Naive thymus-derived CD4-positive, alpha-beta T cell (primary cell): ENCODE measurements at regions of chr1 and their contacts with region 1.

Region 1: DNA sequence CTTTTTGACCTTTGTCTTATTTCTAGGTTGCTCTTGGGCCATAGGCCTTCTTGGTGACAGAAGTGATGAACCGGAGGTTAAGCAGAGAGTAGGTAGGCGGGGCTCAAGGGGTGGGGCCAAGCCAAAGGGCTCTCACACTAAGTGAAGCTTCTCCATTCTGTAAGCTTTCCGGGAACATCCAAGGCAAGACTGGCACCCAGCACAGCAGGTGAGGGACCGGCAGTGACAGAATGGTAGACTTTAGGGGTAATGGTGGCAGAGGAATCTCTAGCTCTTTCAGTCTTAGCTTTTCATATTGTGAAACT is at the start of gene TNFAIP8L2:
- DNase-seq: peak in 7 of 9 donors; percentile 50 to 75 (median 66)
- ATAC-seq: peak; percentile 90
- H3K4me3 ChIP-seq: peak within 1 kb of the TSS; percentile 98
- H3K4me3 Mint-ChIP-seq: peak within 1 kb of the TSS; percentile 93 to 100 (median 99)
- H3K27ac ChIP-seq: peak within 1 kb of the TSS; percentile 78
- H3K27ac Mint-ChIP-seq: peak within 1 kb of the TSS; percentile 88 to 97 (median 95)
- H3K4me1 ChIP-seq: peaks cover 23 to 27% of the 10 kb centered on the region in 2 donors
- H3K4me1 Mint-ChIP-seq: peaks cover 34 to 61% (median 46%) of the 10 kb centered on the region in 7 donors
- H3K27me3 ChIP-seq: no peaks in the 10 kb centered on the region
- H3K27me3 Mint-ChIP-seq: no peaks in the 10 kb centered on the region
- total RNA-seq, gene TNFAIP8L2: 3.1 to 59.4 (median 37.6) TPM

Region 2: DNA sequence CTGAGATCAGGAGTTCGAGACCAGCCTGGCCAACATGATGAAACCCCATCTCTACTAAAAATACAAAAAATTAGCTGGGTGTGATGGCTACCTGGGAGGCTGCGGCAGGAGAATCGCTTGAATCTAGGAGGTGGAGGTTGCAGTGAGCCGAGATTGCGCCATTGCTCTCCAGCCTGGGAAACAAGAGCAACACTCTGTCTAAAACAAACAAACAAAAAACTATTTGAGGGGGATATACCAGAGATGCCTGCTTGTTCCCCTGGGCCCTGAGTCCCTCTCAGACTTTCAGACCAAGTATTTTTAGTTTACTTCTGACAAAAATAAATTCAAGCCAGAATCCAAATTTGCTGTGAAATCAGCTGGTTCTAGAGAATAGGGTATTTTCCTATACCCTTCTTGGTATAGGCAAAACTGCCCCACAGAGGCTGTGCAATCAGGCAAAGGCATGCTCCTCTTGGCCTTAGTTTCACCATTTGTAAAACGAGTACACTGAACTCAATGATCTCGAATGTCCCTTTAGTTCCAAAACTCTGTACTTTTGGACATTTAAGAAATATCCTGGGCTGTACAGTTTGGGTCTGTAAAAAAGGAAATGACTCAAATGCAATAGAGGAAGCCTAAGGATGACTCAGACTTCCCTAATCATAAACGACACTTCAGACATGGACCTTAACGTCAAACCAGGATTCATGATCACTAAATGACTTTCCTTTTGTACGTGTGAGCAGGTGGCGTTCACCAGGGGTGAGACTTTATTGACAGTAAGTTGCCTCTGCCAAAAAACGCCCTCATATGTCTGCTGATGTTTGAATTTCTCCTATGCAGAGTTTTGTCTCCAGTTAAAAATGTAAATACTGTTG is 543.2 kb before region 1 on chr1:
- CTCF ChIA-PET with region 1: no interaction called
- POLR2A ChIA-PET with region 1: no interaction called
- intact Hi-C with region 1: loop called in 1 of 2 experiments (anchors 10 kb)
- DNase-seq: peak in 2 of 9 donors; percentile 47 to 55
- ATAC-seq: peak; percentile 48
- H3K4me3 ChIP-seq: no peak overlapping the region
- H3K4me3 Mint-ChIP-seq: peak overlapping the region in 4 of 10 donors; percentile 21 to 80 (median 54)
- H3K27ac ChIP-seq: no peak overlapping the region
- H3K27ac Mint-ChIP-seq: peak overlapping the region; percentile 29 to 95 (median 88)
- H3K4me1 ChIP-seq: peaks cover 30 to 52% of the 10 kb centered on the region in 2 donors
- H3K4me1 Mint-ChIP-seq: peaks cover 27 to 59% (median 51%) of the 10 kb centered on the region in 7 donors
- H3K27me3 ChIP-seq: no peaks in the 10 kb centered on the region
- H3K27me3 Mint-ChIP-seq: no peaks in the 10 kb centered on the region

Region 3: DNA sequence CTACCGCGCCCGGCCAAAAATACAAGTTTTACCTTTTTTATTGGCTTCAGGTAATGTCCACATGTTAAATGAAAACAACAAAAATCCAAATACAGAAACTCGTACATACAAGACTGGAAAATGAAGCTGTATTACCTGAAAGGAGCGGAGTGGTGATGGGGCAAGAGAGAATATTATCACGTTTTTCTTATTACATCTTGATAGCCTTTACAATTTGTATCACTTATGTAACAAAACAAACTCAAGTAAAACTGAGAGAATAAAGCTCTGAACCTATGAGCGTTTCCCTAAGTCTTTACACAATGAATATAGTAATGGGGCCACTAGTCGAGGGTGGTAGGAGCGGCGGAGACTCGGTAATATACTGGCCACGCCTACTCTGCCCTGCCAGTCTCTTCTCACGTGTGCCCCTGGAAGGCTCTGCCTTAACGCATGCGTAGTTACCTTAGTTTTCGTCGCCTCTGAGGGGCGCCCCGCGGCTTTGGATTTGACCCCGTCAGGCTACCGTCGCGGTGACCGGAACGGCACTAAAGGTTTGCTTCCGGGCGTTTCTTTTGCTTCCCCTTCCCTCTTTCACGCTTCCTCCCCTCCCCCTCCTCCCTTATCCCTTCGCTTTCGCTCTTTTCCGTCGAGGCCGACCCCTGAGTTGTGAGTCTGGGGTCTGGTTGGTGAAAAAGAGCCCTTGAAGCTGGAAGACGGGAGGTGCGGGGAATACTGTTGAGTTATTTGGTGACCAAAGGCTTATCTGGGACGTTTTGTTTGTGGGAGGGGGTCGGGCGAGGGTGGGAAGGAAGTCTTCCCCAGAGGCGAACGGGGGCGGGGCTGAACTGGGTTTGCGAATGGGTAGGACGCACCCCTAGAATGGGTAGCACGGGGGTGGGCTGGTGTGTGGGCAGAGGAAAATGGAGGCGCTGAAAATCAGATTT is 230.4 kb before region 1 on chr1 and contains the start of gene SETDB1:
- CTCF ChIA-PET with region 1: no interaction called
- POLR2A ChIA-PET with region 1: no interaction called
- intact Hi-C with region 1: loop called in 1 of 2 experiments (anchors 2 kb)
- DNase-seq: peak; percentile 69 to 93 (median 90)
- ATAC-seq: peak; percentile 98
- H3K4me3 ChIP-seq: peak within 1 kb of the TSS; percentile 92
- H3K4me3 Mint-ChIP-seq: peak within 1 kb of the TSS; percentile 92 to 97 (median 94)
- H3K27ac ChIP-seq: peak within 1 kb of the TSS; percentile 91
- H3K27ac Mint-ChIP-seq: peak within 1 kb of the TSS; percentile 92 to 99 (median 95)
- H3K4me1 ChIP-seq: peaks cover 0 to 7% of the 10 kb centered on the region in 2 donors
- H3K4me1 Mint-ChIP-seq: peaks cover 15 to 35% (median 27%) of the 10 kb centered on the region in 7 donors
- H3K27me3 ChIP-seq: no peaks in the 10 kb centered on the region
- H3K27me3 Mint-ChIP-seq: no peaks in the 10 kb centered on the region
- total RNA-seq, gene SETDB1: 57.3 to 94.9 (median 61.7) TPM

Region 4: DNA sequence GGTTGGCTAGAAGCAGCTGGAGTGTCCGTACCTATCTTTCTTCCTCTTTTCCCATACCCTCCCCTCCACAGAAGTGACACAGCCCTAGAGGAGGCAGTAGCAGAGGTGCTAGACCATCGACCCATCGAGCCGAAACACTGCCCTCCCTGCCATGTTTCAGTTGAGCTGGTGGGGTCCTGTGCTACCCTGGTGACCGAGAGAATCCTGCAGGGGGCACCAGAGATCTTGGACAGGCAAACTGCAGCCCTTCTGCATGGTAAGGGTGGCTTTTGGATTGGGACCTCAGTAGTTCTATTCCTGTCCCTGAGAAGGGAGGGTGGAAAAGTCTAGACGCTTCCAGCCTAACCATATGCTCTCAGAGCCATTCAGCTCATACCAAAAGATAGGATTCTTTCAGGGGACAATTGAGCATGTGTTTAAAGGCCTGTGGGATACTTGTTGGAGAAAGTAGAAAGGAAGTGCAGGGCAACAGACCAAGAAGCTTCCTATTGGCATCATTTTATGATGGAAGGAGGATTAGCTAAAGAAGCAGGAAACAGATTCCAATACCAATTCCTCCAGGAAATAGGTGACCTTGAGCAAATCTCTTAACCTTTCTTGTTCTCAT is 131.8 kb before region 1 on chr1:
- CTCF ChIA-PET with region 1: interaction called, 54 read pairs
- POLR2A ChIA-PET with region 1: interaction called, 6 read pairs
- intact Hi-C with region 1: loop called (anchors 1 kb)
- DNase-seq: peak; percentile 72 to 91 (median 83)
- ATAC-seq: peak; percentile 100
- H3K4me3 ChIP-seq: no peak overlapping the region
- H3K4me3 Mint-ChIP-seq: peak overlapping the region; percentile 16 to 73 (median 61)
- H3K27ac ChIP-seq: no peak overlapping the region
- H3K27ac Mint-ChIP-seq: peak overlapping the region; percentile 37 to 93 (median 74)
- H3K4me1 ChIP-seq: no peaks in the 10 kb centered on the region
- H3K4me1 Mint-ChIP-seq: peaks cover 4 to 22% (median 6%) of the 10 kb centered on the region in 7 donors
- H3K27me3 ChIP-seq: no peaks in the 10 kb centered on the region
- H3K27me3 Mint-ChIP-seq: no peaks in the 10 kb centered on the region

Region 5: DNA sequence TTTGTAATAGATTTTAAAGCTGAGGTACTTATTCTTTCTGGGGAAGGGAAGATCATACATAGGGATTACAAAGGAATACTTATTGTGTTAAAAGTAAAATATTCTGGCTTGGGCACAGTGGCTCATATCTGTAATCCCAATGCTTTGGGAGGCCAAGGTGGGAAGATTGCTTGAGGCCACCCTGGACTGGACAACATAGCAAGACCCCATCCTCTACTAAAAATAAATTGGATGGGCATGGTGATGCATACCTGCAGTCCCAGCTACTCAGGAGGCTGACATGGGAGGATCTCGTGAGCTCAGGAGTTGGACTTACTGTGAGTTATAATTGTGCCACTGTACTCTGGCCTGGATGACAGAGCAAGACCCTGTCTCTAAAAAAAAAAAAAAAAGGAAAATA is 58.3 kb before region 1 on chr1:
- CTCF ChIA-PET with region 1: interaction called, 130 read pairs
- POLR2A ChIA-PET with region 1: interaction called, 40 read pairs
- intact Hi-C with region 1: loop called (anchors 1 kb)
- DNase-seq: no peak
- ATAC-seq: no peak
- H3K4me3 ChIP-seq: no peak overlapping the region
- H3K4me3 Mint-ChIP-seq: no peak overlapping the region
- H3K27ac ChIP-seq: no peak overlapping the region
- H3K27ac Mint-ChIP-seq: peak overlapping the region in 1 of 9 donors; percentile 25
- H3K4me1 ChIP-seq: no peaks in the 10 kb centered on the region
- H3K4me1 Mint-ChIP-seq: peaks cover 0 to 3% (median 0%) of the 10 kb centered on the region in 7 donors
- H3K27me3 ChIP-seq: no peaks in the 10 kb centered on the region
- H3K27me3 Mint-ChIP-seq: peaks cover 0 to 7% (median 0%) of the 10 kb centered on the region in 5 donors

Region 6: GRCh38 chr1:151176514-151177055 is 20.1 kb after region 1 on chr1:
- CTCF ChIA-PET with region 1: interaction called, 4 read pairs
- POLR2A ChIA-PET with region 1: interaction called, 73 read pairs
- intact Hi-C with region 1: no loop called
- DNase-seq: no peak
- ATAC-seq: no peak
- H3K4me3 ChIP-seq: no peak overlapping the region
- H3K4me3 Mint-ChIP-seq: no peak overlapping the region
- H3K27ac ChIP-seq: no peak overlapping the region
- H3K27ac Mint-ChIP-seq: peak overlapping the region in 5 of 9 donors; percentile 19 to 71 (median 46)
- H3K4me1 ChIP-seq: no peaks in the 10 kb centered on the region
- H3K4me1 Mint-ChIP-seq: peaks cover 0 to 15% (median 5%) of the 10 kb centered on the region in 7 donors
- H3K27me3 ChIP-seq: no peaks in the 10 kb centered on the region
- H3K27me3 Mint-ChIP-seq: no peaks in the 10 kb centered on the region

Region 7: DNA sequence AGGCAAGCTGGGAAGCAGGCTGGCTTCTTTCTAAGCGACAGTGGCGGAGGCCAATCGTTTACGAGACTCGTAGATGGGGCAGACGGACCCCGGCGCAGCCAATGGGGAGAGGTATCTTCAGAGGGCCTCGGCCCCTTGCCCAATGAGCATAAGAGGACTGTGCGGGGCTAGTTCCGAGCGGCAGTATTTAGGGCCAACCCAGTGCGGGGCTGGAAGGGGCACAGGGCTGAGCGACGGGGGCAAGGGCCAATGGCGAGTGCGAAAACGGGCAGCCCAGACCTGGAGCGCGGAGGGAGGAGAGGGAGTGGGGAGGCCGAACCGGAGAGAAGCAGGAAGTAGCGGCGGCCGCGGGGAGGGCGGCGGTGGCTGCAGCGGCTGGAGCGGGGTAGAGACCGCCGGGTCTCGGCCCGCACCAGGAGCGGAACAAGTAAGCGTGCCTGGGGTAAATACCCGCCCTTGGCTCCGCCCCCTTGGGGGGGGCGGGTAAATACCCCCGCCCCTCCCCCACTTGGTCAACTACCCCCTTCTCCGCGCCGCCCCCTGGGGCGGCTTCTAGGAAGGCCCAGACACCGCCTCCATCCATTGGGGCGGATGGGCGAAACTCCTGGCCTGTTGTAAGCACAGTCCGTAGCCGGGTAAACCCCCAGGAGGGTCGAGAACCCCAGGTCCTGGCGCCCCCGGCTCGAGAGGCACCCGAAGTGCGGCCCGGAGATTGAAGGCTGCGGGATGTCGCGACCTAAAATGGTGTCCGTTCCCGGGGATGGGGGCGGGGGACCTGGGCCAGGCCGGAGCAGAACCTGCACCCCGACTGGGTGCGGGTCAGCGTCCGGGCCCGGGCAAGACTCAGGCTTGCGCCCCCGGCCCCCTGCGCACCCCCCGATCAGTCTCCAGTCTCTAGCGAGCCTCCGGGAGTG is 125.8 kb after region 1 on chr1 and contains the start of gene ZNF687:
- CTCF ChIA-PET with region 1: interaction called, 4 read pairs
- POLR2A ChIA-PET with region 1: interaction called, 7 read pairs
- intact Hi-C with region 1: loop called in 1 of 2 experiments (anchors 2 kb)
- DNase-seq: peak; percentile 93 to 99 (median 99)
- ATAC-seq: peak; percentile 91
- H3K4me3 ChIP-seq: peak within 1 kb of the TSS; percentile 96
- H3K4me3 Mint-ChIP-seq: peak within 1 kb of the TSS; percentile 93 to 100 (median 97)
- H3K27ac ChIP-seq: peak within 1 kb of the TSS; percentile 87
- H3K27ac Mint-ChIP-seq: peak within 1 kb of the TSS; percentile 92 to 100 (median 96)
- H3K4me1 ChIP-seq: peaks cover 10 to 11% of the 10 kb centered on the region in 2 donors
- H3K4me1 Mint-ChIP-seq: peaks cover 20 to 42% (median 27%) of the 10 kb centered on the region in 7 donors
- H3K27me3 ChIP-seq: no peaks in the 10 kb centered on the region
- H3K27me3 Mint-ChIP-seq: no peaks in the 10 kb centered on the region
- total RNA-seq, gene ZNF687: 30.4 to 38.1 (median 32.3) TPM